Natural killer cell (primary cell): ENCODE measurements at regions of chr1 and their contacts with region 1.

Region 1: GRCh38 chr1:193471981-193472380 is 285.6 kb upstream of the B3GALT2 start:
- DNase-seq: no peak
- ATAC-seq: peak in 2 of 3 donors; percentile 29 to 50
- H3K4me3 ChIP-seq: no peak overlapping the region
- H3K4me3 Mint-ChIP-seq: no peak overlapping the region
- H3K27ac ChIP-seq: peak overlapping the region; percentile 10
- H3K27ac Mint-ChIP-seq: peak overlapping the region; percentile 30 to 59
- H3K4me1 ChIP-seq: peaks cover 6% of the 10 kb centered on the region
- H3K4me1 Mint-ChIP-seq: peaks cover 27 to 28% of the 10 kb centered on the region in 2 donors
- H3K27me3 ChIP-seq: no peaks in the 10 kb centered on the region
- H3K27me3 Mint-ChIP-seq: no peaks in the 10 kb centered on the region
- CTCF ChIP-seq: no peak

Region 2: DNA sequence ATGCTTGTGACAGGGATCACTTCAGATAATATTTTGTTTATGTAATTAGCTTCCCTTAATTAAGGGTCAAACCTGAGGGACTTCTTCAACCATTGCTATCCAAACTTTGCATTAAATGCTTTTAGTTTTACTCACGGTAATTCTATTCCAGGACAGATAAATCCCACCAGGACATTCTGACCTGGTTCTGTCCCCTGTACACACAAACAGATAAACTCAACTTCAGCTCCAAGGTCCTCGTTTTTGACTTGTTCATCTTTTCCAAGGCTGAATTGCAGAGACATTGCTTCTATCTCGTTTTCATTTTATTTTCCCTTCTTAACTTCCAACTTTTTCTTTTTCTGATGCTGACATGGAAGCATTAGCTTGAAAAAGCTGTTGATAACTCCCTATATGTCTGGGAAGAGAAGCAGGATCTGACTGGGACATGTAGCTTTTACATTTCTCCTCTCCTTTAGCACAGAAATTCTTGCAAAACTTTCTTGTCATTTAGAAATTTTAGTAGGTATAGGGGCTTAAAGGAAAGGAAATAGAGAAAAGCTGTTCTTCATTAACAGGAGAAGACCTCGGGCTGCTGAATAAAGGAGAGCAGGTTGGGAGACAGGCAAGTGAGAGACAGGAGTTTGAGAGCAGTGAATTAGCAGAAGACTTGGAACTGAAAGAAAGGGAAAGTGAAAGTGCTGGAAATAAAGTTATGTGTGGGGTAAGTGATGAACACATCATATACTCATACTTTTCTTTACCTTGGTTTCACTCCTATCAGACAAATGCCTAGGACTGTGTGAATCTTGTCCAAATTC is 53.8 kb before region 1 on chr1:
- intact Hi-C with region 1: no loop called
- DNase-seq: peak in 1 of 2 donors; percentile 66
- ATAC-seq: peak; percentile 74 to 93 (median 84)
- H3K4me3 ChIP-seq: peak overlapping the region; percentile 39
- H3K4me3 Mint-ChIP-seq: peak overlapping the region; percentile 81
- H3K27ac ChIP-seq: peak overlapping the region; percentile 49
- H3K27ac Mint-ChIP-seq: peak overlapping the region; percentile 73 to 82
- H3K4me1 ChIP-seq: peaks cover 4% of the 10 kb centered on the region
- H3K4me1 Mint-ChIP-seq: peaks cover 13 to 17% of the 10 kb centered on the region in 2 donors
- H3K27me3 ChIP-seq: no peaks in the 10 kb centered on the region
- H3K27me3 Mint-ChIP-seq: no peaks in the 10 kb centered on the region
- CTCF ChIP-seq: no peak

Region 3: DNA sequence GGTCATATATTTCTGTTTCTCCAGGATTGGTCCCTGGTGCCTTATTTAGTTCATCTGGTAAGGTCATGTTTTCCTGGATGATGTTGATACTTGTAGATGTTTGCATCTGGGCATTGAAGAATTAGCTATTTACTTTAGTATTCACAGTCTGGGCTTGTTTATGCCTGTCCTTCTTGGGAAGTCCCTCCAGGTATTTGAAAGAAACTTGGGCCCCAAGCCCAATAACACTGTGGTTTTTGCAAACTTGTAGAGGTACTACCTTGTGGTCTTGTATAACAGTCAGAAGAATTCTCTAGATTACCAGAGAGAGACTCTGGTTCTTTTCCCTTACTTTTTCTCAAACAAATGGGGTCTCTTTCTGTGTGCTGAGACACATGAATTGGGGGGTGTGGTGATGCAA is 34.2 kb before region 1 on chr1:
- intact Hi-C with region 1: loop called (anchors 5 kb)
- DNase-seq: peak in 1 of 2 donors; percentile 49
- ATAC-seq: peak; percentile 35 to 67 (median 54)
- H3K4me3 ChIP-seq: no peak overlapping the region
- H3K4me3 Mint-ChIP-seq: no peak overlapping the region
- H3K27ac ChIP-seq: peak overlapping the region; percentile 45
- H3K27ac Mint-ChIP-seq: peak overlapping the region; percentile 47 to 84
- H3K4me1 ChIP-seq: peaks cover 12% of the 10 kb centered on the region
- H3K4me1 Mint-ChIP-seq: peaks cover 40% of the 10 kb centered on the region in 2 donors
- H3K27me3 ChIP-seq: no peaks in the 10 kb centered on the region
- H3K27me3 Mint-ChIP-seq: no peaks in the 10 kb centered on the region
- CTCF ChIP-seq: no peak